Right ventricle myocardium inferior (tissue), 1 donor: ENCODE measurements at regions of chr1 and their contacts with region 1.

Region 1: GRCh38 chr1:85692730-85693314 is 15.4 kb downstream of the ZNHIT6 start:
- DNase-seq: no peak
- ATAC-seq: no peak

Region 2: DNA sequence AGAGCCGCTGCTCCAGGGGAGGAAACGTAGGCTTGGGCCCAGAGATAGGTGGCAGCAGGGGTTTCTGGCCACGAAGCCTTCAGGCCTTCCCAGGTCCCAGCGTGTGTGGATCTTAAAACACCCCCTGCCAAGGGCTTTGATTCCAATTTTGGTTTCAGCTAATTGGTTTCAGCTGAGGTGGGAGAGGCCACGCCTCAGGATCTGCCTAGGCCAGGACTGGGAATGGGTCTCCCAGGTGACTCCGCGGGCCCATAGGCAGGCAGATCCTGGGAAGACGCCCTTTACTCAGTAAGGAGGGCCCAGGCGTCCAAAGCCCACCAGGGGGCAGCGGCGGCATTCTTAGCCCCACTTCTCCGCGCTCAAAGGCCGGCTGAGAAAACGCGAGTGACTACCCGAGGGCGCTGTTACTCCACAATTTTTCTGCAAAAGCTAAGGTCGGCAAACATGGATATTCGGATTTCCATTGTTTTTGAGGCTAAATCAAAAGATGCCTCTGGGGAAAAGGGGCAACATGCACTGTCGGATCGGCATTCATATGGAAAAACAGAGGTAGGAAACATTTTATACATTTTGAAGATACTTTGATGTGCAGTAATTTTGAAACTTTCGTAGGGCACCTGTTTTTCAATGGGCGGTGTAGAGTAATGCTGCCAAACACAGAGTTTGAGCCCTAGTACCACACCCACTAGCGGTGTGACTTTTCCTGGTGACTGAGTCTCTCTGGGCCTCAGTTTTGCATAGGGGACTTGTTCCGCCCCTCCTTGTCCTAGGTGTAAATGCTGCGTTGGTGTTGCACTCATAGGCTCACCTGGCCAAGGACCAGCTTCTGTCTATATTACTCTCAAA is 384.6 kb before region 1 on chr1:
- intact Hi-C with region 1: loop called (anchors 2 kb)
- DNase-seq: peak; percentile 88
- ATAC-seq: peak; percentile 98

Region 3: GRCh38 chr1:85406887-85407533 is 285.8 kb before region 1 on chr1:
- intact Hi-C with region 1: loop called (anchors 10 kb)
- DNase-seq: no peak
- ATAC-seq: peak; percentile 78

Region 4: DNA sequence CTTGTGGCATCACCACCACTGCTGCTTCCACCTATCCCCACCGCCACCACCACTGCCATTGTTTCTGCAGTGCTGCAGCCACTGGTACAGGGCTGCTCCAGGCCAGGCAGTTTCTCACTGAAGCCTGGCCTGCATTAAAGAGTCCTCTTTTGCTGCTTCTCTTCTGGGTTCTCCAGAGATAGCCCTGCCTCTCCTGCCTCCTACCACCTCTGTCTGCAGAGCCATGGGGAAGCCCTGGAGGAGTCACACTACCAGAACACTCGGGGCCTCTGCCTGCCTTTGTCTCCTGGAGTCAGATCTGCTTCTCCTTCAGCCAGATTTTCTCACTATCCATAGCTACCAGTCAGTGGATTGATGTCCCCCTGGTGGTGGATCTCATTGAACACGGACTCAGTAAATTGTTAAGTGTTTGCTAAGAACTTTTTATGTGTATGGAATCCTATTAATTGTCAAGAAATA is 190.2 kb before region 1 on chr1:
- intact Hi-C with region 1: loop called (anchors 5 kb)
- DNase-seq: no peak
- ATAC-seq: peak; percentile 85

Region 5: DNA sequence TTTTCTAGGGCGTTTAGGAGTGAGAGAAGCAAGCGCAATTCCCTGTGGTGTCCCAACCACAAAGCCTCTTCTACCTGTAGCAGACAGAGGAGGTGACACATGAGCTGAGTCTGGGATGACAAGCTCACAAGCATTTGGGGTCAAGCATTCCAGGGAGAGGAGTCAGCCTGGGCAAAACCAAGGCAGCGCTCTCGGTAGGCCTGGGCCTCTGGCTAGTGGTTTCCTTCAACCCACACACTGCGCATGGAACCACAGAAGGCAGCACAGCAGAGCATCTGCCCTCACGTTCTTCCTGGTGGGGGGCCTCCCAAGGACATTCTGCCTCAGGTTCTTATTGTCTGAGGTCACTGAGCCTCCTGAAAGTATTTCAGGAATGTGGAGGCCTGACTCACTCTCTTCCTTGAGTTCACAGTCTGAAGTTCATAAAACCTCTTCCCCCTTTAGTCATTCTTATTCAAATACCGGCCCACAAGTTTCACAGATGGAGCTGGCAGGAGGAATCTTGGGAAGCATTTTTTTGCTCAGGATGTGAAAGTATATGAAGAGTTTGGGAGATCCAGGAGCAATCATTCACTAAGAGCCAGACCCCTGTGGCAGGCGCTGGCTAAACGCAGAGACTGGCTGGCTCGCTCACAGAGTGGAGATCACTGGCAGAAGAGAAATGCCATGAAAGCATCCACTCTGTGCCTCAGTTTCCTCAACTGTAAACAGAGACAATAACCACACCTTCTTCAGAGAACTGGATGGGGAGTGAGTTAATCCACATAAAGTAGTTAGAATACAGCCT is 85.5 kb before region 1 on chr1:
- intact Hi-C with region 1: loop called (anchors 5 kb)
- DNase-seq: no peak
- ATAC-seq: no peak

Region 6: DNA sequence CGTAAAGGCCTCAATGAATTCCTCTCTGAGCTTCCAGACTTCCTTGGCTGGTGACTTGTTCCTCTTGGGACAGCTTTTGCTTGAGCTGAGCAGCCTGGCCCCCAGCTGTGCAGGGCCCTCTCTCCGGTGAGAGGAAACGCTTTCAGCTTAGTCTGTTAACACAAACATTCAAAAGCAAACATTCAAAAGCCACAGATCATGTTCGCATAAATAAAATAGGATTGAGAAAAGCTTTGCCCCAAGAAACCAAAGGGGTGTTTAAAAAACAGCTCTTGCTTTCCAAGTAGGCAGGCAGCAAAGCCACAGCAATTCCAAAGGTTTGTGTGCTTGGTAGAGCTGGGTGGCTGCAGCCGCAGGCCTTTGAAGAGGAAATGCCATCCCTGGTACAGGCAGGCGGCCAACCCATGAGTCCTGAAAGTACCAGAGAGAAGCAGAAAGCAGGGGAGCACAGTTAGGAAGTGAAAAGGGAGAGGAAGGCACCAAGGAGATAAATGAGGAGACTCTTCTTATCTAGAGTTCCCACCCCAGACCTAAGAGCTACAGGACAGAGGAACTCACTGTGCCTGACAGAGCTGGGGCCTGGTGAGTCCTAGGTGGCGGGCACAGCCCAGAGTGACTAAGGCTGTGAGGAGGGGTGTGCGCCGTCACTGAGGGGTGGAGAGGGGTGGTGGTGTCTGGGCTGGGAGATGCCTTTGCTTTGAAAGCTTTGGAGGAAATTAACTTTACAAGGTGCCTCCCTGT is 63.9 kb before region 1 on chr1:
- intact Hi-C with region 1: no loop called
- DNase-seq: peak; percentile 72
- ATAC-seq: peak; percentile 79